GM12878 (cell line): ENCODE measurements at regions of chr4 and their contacts with region 1.

Region 1: GRCh38 chr4:121656269-121656641 is 40.5 kb downstream of the ANXA5 start:
- DNase-seq: peak; percentile 7
- ATAC-seq: peak; percentile 79
- H3K4me3 ChIP-seq: no peak overlapping the region
- H3K27ac ChIP-seq: no peak overlapping the region
- H3K4me1 ChIP-seq: peaks cover 12% of the 10 kb centered on the region
- H3K27me3 ChIP-seq: no peaks in the 10 kb centered on the region
- CTCF ChIP-seq: peak; percentile 38 to 53 (median 49); a peak in 5 of 6 replicates
- EP300 ChIP-seq: no peak
- POLR2A ChIP-seq: no peak
- RAD21 ChIP-seq: peak; percentile 58

Region 2: DNA sequence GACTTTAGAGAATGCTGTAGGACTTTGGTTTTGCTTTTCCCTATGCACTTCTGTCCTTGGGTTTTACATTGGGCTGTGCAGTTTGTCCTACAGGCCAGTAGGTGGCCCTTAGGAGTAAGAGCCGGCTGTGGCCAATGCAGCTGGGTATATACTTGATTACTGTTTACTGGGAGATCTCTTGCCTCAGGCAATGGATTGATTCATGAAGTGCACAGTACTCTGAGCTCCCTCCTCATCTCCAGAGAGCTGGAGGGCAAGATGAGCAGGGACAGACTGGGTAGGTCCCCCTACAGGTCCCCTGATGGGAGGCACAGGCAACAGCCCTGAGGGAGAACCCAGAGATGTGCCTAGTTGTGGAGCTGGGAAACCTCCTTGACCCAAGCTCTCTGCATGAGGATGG is 171.6 kb before region 1 on chr4:
- CTCF ChIA-PET with region 1: interaction called, 35 read pairs
- POLR2A ChIA-PET with region 1: no interaction called
- RAD21 ChIA-PET with region 1: interaction called, 14 read pairs
- SMC1A ChIA-PET with region 1: interaction called, 7 read pairs
- in situ Hi-C with region 1: loop called (anchors 10 kb)
- intact Hi-C with region 1: loop called (anchors 1 kb)
- DNase-seq: no peak
- ATAC-seq: peak; percentile 97
- H3K4me3 ChIP-seq: no peak overlapping the region
- H3K27ac ChIP-seq: no peak overlapping the region
- H3K4me1 ChIP-seq: no peaks in the 10 kb centered on the region
- H3K27me3 ChIP-seq: no peaks in the 10 kb centered on the region
- CTCF ChIP-seq: peak; percentile 72 to 83 (median 81)
- EP300 ChIP-seq: no peak
- POLR2A ChIP-seq: no peak
- RAD21 ChIP-seq: peak; percentile 73

Region 3: DNA sequence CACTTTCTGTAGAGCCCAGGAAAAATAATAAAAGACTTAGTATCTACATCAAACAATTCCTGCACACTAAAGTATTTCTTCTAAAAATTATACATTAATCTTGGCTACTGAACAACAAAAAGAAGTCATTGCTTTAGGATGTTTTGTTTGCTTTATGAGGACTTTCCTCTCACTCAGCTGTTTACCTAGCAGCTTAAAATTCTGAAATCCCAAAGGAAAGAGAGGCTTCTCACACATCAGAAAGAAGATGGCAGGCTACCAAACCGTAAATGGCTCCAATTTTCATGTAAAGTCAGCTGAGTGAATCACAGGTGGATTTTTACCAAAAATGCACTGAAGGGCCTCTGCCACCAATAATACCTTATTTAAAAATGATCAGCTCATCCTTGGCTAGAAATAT is 304.6 kb after region 1 on chr4:
- CTCF ChIA-PET with region 1: no interaction called
- POLR2A ChIA-PET with region 1: no interaction called
- RAD21 ChIA-PET with region 1: no interaction called
- SMC1A ChIA-PET with region 1: no interaction called
- in situ Hi-C with region 1: no loop called
- intact Hi-C with region 1: no loop called
- DNase-seq: no peak
- ATAC-seq: no peak
- H3K4me3 ChIP-seq: no peak overlapping the region
- H3K27ac ChIP-seq: no peak overlapping the region
- H3K4me1 ChIP-seq: no peaks in the 10 kb centered on the region
- H3K27me3 ChIP-seq: no peaks in the 10 kb centered on the region
- CTCF ChIP-seq: no peak
- EP300 ChIP-seq: no peak
- POLR2A ChIP-seq: no peak
- RAD21 ChIP-seq: no peak